PC-9 (cell line): ENCODE measurements at regions of chr6 and their contacts with region 1.

Region 1: GRCh38 chr6:4388675-4389074 is 253.3 kb upstream of the ECI2 start:
- DNase-seq: peak; percentile 83 to 90
- H3K4me3 ChIP-seq: no peak overlapping the region
- H3K27ac ChIP-seq: peak overlapping the region; percentile 37
- H3K4me1 ChIP-seq: peaks cover 14% of the 10 kb centered on the region
- H3K27me3 ChIP-seq: no peaks in the 10 kb centered on the region
- CTCF ChIP-seq: no peak

Region 2: GRCh38 chr6:4240148-4240547 is 148.5 kb before region 1 on chr6:
- CTCF ChIA-PET with region 1: no interaction called
- POLR2A ChIA-PET with region 1: no interaction called
- intact Hi-C with region 1: no loop called
- DNase-seq: no peak
- H3K4me3 ChIP-seq: no peak overlapping the region
- H3K27ac ChIP-seq: no peak overlapping the region
- H3K4me1 ChIP-seq: no peaks in the 10 kb centered on the region
- H3K27me3 ChIP-seq: no peaks in the 10 kb centered on the region
- CTCF ChIP-seq: no peak

Region 3: GRCh38 chr6:4327841-4328240 is 60.8 kb before region 1 on chr6:
- CTCF ChIA-PET with region 1: no interaction called
- POLR2A ChIA-PET with region 1: no interaction called
- intact Hi-C with region 1: no loop called
- DNase-seq: no peak
- H3K4me3 ChIP-seq: no peak overlapping the region
- H3K27ac ChIP-seq: no peak overlapping the region
- H3K4me1 ChIP-seq: peaks cover 7% of the 10 kb centered on the region
- H3K27me3 ChIP-seq: no peaks in the 10 kb centered on the region
- CTCF ChIP-seq: no peak

Region 4: GRCh38 chr6:4364172-4364571 is 24.5 kb before region 1 on chr6:
- CTCF ChIA-PET with region 1: no interaction called
- POLR2A ChIA-PET with region 1: no interaction called
- intact Hi-C with region 1: no loop called
- DNase-seq: no peak
- H3K4me3 ChIP-seq: no peak overlapping the region
- H3K27ac ChIP-seq: no peak overlapping the region
- H3K4me1 ChIP-seq: peaks cover 19% of the 10 kb centered on the region
- H3K27me3 ChIP-seq: no peaks in the 10 kb centered on the region
- CTCF ChIP-seq: no peak

Region 5: DNA sequence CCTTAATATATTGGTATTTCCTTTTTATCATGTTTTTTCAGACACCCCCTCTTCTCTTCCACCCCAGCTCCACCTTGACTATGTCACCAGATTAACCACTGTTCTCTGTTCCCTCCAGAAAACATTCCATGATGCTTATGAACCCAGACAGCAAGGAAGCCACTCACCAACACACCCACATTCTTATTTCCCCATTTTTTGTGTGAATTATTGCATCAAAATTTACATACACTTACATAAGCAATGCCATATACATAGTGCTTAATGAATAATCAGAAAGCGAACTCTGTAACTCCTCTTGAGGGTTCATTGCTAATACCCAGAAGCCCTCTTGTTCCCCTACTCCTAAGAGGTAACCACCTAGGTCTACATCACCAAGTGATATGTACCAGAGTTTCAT is 205.3 kb after region 1 on chr6:
- CTCF ChIA-PET with region 1: no interaction called
- POLR2A ChIA-PET with region 1: no interaction called
- intact Hi-C with region 1: no loop called
- DNase-seq: no peak
- H3K4me3 ChIP-seq: no peak overlapping the region
- H3K27ac ChIP-seq: no peak overlapping the region
- H3K4me1 ChIP-seq: no peaks in the 10 kb centered on the region
- H3K27me3 ChIP-seq: no peaks in the 10 kb centered on the region
- CTCF ChIP-seq: no peak

Region 6: DNA sequence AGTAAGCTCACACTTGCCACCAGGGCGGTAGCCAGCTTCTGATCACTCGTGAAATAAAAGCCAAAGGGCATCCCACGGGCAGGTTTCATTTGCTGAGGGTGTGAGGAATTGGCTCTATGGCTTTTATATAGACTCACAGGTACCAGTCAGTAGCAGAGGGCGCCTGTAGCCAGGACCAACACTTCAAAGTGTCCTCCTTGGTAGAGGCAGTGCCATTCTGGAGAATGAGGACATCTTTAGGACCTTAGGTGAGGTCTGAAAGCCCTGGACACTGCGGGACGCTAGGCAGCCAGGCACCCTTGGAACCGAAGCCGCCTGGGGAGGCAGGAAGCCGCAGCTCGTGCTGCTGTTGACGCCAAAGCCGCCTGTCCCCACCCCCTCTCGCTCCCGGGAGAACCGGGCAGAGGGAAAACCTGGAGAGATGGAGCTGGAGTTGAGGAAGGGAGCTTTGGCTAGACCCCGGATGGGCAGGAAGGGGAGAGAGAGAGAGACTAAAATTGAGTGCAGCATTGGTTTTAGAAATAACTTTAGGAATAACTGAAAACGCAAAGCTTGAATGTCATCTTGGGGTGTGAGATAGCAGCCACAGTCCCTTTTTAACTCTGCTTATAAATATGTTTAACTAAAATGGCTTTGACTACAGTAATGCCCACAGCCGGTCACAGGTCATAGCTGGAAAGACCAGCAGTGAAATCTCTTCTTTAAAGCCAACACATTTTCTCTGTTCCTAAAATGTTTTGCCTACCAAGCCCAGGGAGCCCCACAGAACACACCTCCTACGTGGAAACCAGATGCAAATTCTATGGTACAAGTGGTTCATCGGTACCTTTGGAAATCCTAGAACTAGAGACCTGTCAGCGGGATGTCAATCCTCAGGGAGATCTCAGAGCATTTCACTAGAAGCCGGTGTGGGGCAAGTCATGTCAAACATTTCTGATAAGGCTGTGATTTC is 259.0 kb after region 1 on chr6:
- CTCF ChIA-PET with region 1: no interaction called
- POLR2A ChIA-PET with region 1: no interaction called
- intact Hi-C with region 1: loop called (anchors 5 kb)
- DNase-seq: peak; percentile 40 to 69
- H3K4me3 ChIP-seq: peak overlapping the region; percentile 46
- H3K27ac ChIP-seq: no peak overlapping the region
- H3K4me1 ChIP-seq: peaks cover 14% of the 10 kb centered on the region; the same call in 1 of the 2 replicates
- H3K27me3 ChIP-seq: no peaks in the 10 kb centered on the region
- CTCF ChIP-seq: no peak

Region 7: GRCh38 chr6:4707011-4707410 is 318.3 kb after region 1 on chr6:
- CTCF ChIA-PET with region 1: no interaction called
- POLR2A ChIA-PET with region 1: no interaction called
- intact Hi-C with region 1: loop called (anchors 1 kb)
- DNase-seq: peak; percentile 56 to 88
- H3K4me3 ChIP-seq: no peak overlapping the region
- H3K27ac ChIP-seq: peak overlapping the region; percentile 34; the same call in 1 of the 2 replicates
- H3K4me1 ChIP-seq: peaks cover 11% of the 10 kb centered on the region
- H3K27me3 ChIP-seq: no peaks in the 10 kb centered on the region
- CTCF ChIP-seq: no peak